GM10248 (cell line): ENCODE measurements at regions of chr6 and their contacts with region 1.

Region 1: GRCh38 chr6:152338335-152339125 is 298.6 kb downstream of the SYNE1 start:
- DNase-seq: peak; percentile 54
- CTCF ChIP-seq: peak; percentile 90

Region 2: DNA sequence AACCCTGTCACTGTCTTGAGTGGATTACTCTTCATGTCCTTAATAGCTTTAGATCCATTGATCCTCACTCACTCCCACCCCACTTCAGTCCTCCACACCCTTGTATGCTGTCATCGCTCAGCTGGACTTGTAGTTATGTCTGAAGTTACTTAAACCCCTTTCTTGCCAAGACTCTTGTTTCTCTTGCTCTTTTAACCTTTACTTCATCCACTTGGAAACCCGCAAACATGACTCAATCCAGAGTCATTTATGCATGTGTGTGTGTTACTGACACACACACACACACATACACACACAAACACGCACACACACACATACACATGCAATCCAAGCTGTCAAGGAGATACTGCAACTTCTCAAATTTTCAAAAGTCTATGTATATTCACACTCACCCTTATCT is 43.2 kb before region 1 on chr6:
- CTCF ChIA-PET with region 1: interaction called, 35 read pairs
- POLR2A ChIA-PET with region 1: no interaction called
- DNase-seq: no peak
- CTCF ChIP-seq: no peak

Region 3: DNA sequence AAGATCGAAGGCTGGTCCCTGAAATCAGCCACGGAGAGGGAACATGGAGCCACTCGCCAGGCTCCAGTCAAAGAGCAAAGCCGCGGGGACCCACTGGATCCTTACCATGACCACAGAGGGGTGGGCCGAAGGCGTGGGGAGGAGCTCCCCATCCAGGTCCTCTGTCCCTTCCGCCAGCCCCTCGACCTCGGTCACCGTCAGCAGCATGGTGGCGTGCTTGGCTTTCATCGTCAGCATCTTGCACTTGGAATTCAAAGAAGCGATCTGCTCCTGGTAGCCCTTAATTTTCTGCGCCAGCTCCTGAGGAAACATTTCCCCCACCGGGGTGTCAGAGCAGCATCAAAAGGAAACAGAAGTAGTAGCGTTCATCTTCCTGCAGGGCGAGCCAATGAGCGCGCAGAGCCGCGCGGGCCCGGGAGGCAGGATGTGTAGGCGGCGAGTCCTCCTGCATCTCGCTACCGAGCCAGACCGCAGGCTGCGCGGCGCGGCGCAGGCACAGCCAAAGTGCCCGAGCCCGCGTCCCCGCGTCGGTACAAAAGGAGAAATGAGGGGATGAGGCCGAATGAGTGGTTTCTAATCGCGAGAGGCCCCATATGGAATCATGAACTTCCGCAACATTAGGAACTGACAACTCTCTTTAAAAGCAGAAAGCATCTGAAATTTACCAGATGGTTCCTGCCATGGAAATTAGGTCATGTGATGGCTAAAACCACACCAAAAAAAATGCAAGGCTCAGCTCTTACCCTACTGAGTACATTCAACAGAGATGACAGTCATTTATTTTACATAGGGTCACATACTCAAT is 36.6 kb before region 1 on chr6:
- CTCF ChIA-PET with region 1: interaction called, 36 read pairs
- POLR2A ChIA-PET with region 1: no interaction called
- DNase-seq: peak; percentile 88
- CTCF ChIP-seq: peak; percentile 49

Region 4: DNA sequence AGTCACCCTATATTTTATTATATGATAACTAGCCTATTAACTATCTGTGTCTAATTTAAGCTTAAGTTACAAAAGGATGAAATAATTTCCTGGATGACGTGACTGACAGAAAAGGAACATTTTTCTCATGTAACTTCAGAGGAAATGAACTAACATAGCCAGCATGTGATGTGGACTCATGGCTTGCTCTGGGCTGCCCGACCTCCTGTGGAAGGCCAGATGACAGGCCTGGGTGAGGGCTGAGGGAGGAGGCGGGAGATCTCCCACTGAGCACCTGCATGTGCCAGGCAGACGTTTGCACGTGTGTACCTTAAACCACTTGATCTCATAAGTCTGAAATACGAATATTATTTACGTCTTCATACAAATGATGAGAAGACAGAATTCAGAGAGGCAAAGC is 22.5 kb before region 1 on chr6:
- CTCF ChIA-PET with region 1: interaction called, 40 read pairs
- POLR2A ChIA-PET with region 1: no interaction called
- DNase-seq: no peak
- CTCF ChIP-seq: no peak

Region 5: GRCh38 chr6:152351110-152351509 is 12.6 kb after region 1 on chr6:
- CTCF ChIA-PET with region 1: interaction called, 38 read pairs
- POLR2A ChIA-PET with region 1: no interaction called
- DNase-seq: no peak
- CTCF ChIP-seq: no peak

Region 6: GRCh38 chr6:152360034-152360433 is 21.5 kb after region 1 on chr6:
- CTCF ChIA-PET with region 1: interaction called, 18 read pairs
- POLR2A ChIA-PET with region 1: no interaction called
- DNase-seq: no peak
- CTCF ChIP-seq: no peak